Activated naive CD8-positive, alpha-beta T cell treated with anti-CD3 and anti-CD28 coated beads, Interleukin-2, amount 10 ng/mL, durations not matched to agents 7 days and 5 days (primary cell): ENCODE measurements at regions of chr6 and their contacts with region 1.

Region 1: DNA sequence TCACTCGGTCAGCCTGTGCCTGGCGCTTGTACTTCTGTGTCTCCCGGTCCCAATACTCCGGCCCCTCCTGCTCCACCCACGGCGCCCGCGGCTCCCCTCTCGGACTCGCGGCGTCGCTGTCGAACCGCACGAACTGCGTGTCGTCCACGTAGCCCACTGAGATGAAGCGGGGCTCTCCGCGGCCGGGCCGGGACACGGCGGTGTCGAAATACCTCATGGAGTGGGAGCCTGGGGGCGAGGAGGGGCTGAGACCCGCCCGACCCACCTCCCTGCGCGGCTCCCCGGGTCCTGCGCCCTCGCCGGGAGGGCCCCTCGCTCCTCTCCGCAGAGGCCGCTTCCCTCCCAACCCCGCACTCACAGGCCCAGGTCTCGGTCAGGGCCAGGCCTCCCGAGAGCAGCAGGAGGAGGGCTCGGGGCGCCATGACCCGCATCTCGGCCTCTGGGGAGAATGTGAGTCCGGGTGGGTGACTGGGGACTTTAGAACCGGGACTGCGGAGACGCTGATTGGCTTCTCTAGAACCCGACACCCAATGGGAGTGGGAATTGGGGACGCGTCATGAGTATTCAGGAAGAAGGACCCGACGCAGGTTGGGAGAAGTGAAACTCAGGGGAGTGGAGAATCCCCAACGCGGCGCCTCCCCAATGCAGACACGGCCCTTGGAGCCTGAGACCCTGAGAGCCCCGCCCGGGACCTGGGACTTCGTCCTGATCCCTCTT is at the start of gene HLA-C:
- DNase-seq: peak; percentile 81
- ATAC-seq: peak; percentile 83
- H3K4me3 Mint-ChIP-seq: peak within 1 kb of the TSS; percentile 97
- H3K27ac Mint-ChIP-seq: peak within 1 kb of the TSS; percentile 100
- H3K4me1 Mint-ChIP-seq: peaks cover 30% of the 10 kb centered on the region
- H3K27me3 Mint-ChIP-seq: peaks cover 4% of the 10 kb centered on the region
- total RNA-seq, gene HLA-C: 1,328 to 1,360 TPM

Region 2: GRCh38 chr6:31307669-31308049 is 35.9 kb after region 1 on chr6:
- POLR2A ChIA-PET with region 1: no interaction called
- DNase-seq: no peak
- ATAC-seq: no peak
- H3K4me3 Mint-ChIP-seq: no peak overlapping the region
- H3K27ac Mint-ChIP-seq: no peak overlapping the region
- H3K4me1 Mint-ChIP-seq: no peaks in the 10 kb centered on the region
- H3K27me3 Mint-ChIP-seq: peaks cover 42% of the 10 kb centered on the region

Region 3: GRCh38 chr6:31352683-31353383 is 81.0 kb after region 1 on chr6:
- POLR2A ChIA-PET with region 1: interaction called, 20 read pairs
- DNase-seq: no peak
- ATAC-seq: no peak
- H3K4me3 Mint-ChIP-seq: peak overlapping the region; percentile 93
- H3K27ac Mint-ChIP-seq: peak overlapping the region; percentile 73
- H3K4me1 Mint-ChIP-seq: peaks cover 41% of the 10 kb centered on the region
- H3K27me3 Mint-ChIP-seq: no peaks in the 10 kb centered on the region

Region 4: GRCh38 chr6:31366693-31367470 is 95.1 kb after region 1 on chr6:
- POLR2A ChIA-PET with region 1: interaction called, 12 read pairs
- DNase-seq: peak; percentile 93
- ATAC-seq: peak; percentile 99
- H3K4me3 Mint-ChIP-seq: peak overlapping the region; percentile 78
- H3K27ac Mint-ChIP-seq: no peak overlapping the region
- H3K4me1 Mint-ChIP-seq: peaks cover 13% of the 10 kb centered on the region
- H3K27me3 Mint-ChIP-seq: peaks cover 52% of the 10 kb centered on the region